A673 (cell line): ENCODE measurements at regions of chrX and their contacts with region 1.

Region 1: GRCh38 chrX:111244235-111244750 is 26.0 kb downstream of the CAPN6 start:
- DNase-seq: peak; percentile 19
- H3K4me3 ChIP-seq: no peak overlapping the region
- H3K27ac ChIP-seq: no peak overlapping the region
- H3K4me1 ChIP-seq: no peaks in the 10 kb centered on the region
- H3K27me3 ChIP-seq: peaks cover 5% of the 10 kb centered on the region
- CTCF ChIP-seq: peak; percentile 61

Region 2: GRCh38 chrX:110450050-110450449 is 794.2 kb before region 1 on chrX:
- CTCF ChIA-PET with region 1: no interaction called
- POLR2A ChIA-PET with region 1: no interaction called
- intact Hi-C with region 1: loop called (anchors 10 kb)
- DNase-seq: peak; percentile 84
- H3K4me3 ChIP-seq: no peak overlapping the region
- H3K27ac ChIP-seq: no peak overlapping the region
- H3K4me1 ChIP-seq: no peaks in the 10 kb centered on the region
- H3K27me3 ChIP-seq: peaks cover under 1% of the 10 kb centered on the region
- CTCF ChIP-seq: peak; percentile 80

Region 3: DNA sequence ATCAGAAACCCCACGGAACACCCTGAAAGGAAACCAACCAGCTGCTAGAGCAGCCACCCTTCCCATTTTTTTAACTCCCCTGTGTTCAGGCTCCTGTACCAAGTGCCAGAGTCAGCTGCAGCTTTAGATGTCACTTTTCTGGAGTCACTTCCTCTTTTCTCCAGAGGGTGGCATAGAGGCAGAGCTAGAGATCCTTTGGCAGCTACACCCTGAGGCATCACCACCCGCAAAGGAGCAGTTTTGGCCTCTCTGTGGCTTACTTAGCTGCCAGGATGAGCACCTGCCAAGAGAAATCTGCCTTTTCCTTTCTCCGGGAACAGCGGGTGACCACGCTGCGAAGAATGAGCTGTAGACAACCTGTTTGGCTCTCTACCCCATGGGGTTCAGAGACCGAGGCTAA is 390.7 kb before region 1 on chrX:
- CTCF ChIA-PET with region 1: interaction called, 9 read pairs
- POLR2A ChIA-PET with region 1: no interaction called
- intact Hi-C with region 1: loop called (anchors 2 kb)
- DNase-seq: peak; percentile 52
- H3K4me3 ChIP-seq: no peak overlapping the region
- H3K27ac ChIP-seq: no peak overlapping the region
- H3K4me1 ChIP-seq: no peaks in the 10 kb centered on the region
- H3K27me3 ChIP-seq: peaks cover 6% of the 10 kb centered on the region
- CTCF ChIP-seq: peak; percentile 46

Region 4: GRCh38 chrX:110992611-110993010 is 251.7 kb before region 1 on chrX:
- CTCF ChIA-PET with region 1: interaction called, 3 read pairs
- POLR2A ChIA-PET with region 1: no interaction called
- intact Hi-C with region 1: loop called (anchors 2 kb)
- DNase-seq: peak; percentile 19
- H3K4me3 ChIP-seq: no peak overlapping the region
- H3K27ac ChIP-seq: no peak overlapping the region
- H3K4me1 ChIP-seq: no peaks in the 10 kb centered on the region
- H3K27me3 ChIP-seq: peaks cover 19% of the 10 kb centered on the region
- CTCF ChIP-seq: peak; percentile 66

Region 5: GRCh38 chrX:111098874-111099273 is 145.4 kb before region 1 on chrX:
- CTCF ChIA-PET with region 1: interaction called, 6 read pairs
- POLR2A ChIA-PET with region 1: no interaction called
- intact Hi-C with region 1: loop called (anchors 10 kb)
- DNase-seq: peak; percentile 50
- H3K4me3 ChIP-seq: no peak overlapping the region
- H3K27ac ChIP-seq: no peak overlapping the region
- H3K4me1 ChIP-seq: no peaks in the 10 kb centered on the region
- H3K27me3 ChIP-seq: peaks cover 15% of the 10 kb centered on the region
- CTCF ChIP-seq: peak; percentile 77

Region 6: DNA sequence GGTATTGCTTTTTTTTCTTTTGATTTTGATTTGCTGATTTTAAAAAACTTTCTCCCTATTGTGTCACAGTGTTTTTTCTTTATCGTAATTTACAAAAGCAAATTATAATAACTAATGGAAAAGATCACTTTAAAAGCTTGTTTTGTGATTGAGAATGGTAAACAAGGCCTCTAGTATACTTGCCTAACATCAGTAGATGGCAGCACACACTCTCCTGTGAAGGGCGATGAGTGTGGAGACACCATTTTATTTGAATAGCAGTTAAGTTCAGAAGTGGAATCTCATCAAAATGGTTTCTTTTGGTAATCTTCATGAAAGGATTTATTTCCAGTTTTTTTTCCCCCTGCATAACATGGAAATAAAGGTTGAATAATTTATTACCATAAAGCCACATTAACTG is 76.0 kb before region 1 on chrX:
- CTCF ChIA-PET with region 1: interaction called, 3 read pairs
- POLR2A ChIA-PET with region 1: no interaction called
- intact Hi-C with region 1: loop called (anchors 2 kb)
- DNase-seq: peak; percentile 45
- H3K4me3 ChIP-seq: no peak overlapping the region
- H3K27ac ChIP-seq: no peak overlapping the region
- H3K4me1 ChIP-seq: no peaks in the 10 kb centered on the region
- H3K27me3 ChIP-seq: peaks cover 3% of the 10 kb centered on the region
- CTCF ChIP-seq: peak; percentile 54

Region 7: DNA sequence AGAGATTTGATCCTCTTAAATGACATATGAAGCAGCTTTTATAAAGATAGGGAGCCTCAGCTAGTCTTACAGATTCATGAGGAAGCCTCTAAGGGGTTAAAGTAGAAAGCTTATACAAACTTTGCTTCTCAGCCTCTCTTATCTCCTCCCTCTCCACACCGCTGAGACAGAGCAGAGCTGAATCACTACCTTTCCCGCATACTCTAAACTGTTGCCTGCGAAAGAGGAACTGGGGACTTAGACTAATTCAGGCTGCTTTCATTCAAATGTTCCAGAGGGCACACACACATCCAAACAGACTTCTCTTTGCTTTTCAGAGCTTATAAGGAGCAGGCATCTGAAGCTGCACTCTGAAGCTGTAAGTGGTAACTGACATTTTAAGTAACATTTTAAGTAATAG is 267.2 kb after region 1 on chrX and contains the start of gene SERTM2:
- CTCF ChIA-PET with region 1: no interaction called
- POLR2A ChIA-PET with region 1: no interaction called
- intact Hi-C with region 1: no loop called
- DNase-seq: no peak
- H3K4me3 ChIP-seq: no peak within 1 kb of the TSS
- H3K27ac ChIP-seq: no peak within 1 kb of the TSS
- H3K4me1 ChIP-seq: no peaks in the 10 kb centered on the region
- H3K27me3 ChIP-seq: peaks cover 15% of the 10 kb centered on the region
- CTCF ChIP-seq: no peak
- total RNA-seq, gene SERTM2: not detected in 2 replicates